ENCODE measurements at regions of chr3 and their contacts with region 1.

Region 1: GRCh38 chr3:29280404-29281093 is at the start of gene RBMS3:
- DNase-seq: peak; percentile 92 to 93
- H3K4me3 ChIP-seq: peak within 1 kb of the TSS; percentile 24 to 51 (median 47)
- H3K27ac ChIP-seq: peak within 1 kb of the TSS; percentile 86 to 96 (median 92)
- H3K4me1 ChIP-seq: peaks cover 0 to 8% of the 10 kb centered on the region in 2 donors
- H3K27me3 ChIP-seq: no peaks in the 10 kb centered on the region
- CTCF ChIP-seq: peak; percentile 21 to 81 (median 59)
- POLR2A ChIP-seq: peak in 1 of 2 donors; percentile 77
- total RNA-seq, gene RBMS3: 116 to 171 (median 152) TPM

Region 2: DNA sequence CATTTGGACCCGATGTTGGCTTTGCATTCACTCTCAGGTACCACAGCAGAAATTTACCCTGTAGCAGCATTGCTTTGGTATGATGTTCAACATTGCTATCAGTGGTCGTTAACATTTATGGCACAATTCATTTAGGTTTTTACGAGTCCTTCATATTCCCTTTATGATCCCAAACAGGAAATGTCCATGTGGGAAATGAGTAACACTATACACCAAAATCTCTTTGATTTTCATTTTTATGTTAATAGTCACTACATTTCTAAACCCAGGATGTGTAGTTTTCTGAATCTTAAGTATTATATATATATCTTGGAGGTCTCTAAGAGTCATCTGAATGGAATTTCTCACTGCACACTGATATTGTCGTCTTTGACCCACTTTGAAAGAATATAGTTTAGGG is 78.2 kb before region 1 on chr3:
- intact Hi-C with region 1: no loop called
- DNase-seq: no peak
- H3K4me3 ChIP-seq: no peak overlapping the region
- H3K27ac ChIP-seq: no peak overlapping the region
- H3K4me1 ChIP-seq: no peaks in the 10 kb centered on the region
- H3K27me3 ChIP-seq: no peaks in the 10 kb centered on the region
- CTCF ChIP-seq: no peak
- POLR2A ChIP-seq: no peak

Region 3: GRCh38 chr3:29694783-29695182 is 414.2 kb after region 1 on chr3:
- intact Hi-C with region 1: loop called (anchors 5 kb)
- DNase-seq: peak; percentile 53 to 58
- H3K4me3 ChIP-seq: no peak overlapping the region
- H3K27ac ChIP-seq: peak overlapping the region; percentile 89 to 94 (median 92)
- H3K4me1 ChIP-seq: peaks cover 35 to 62% of the 10 kb centered on the region in 2 donors
- H3K27me3 ChIP-seq: no peaks in the 10 kb centered on the region
- CTCF ChIP-seq: no peak
- POLR2A ChIP-seq: no peak